Colonic mucosa (tissue), 4 donors: ENCODE measurements at regions of chr18 and their contacts with region 1.

Region 1: GRCh38 chr18:9334329-9334972 is at the start of gene TWSG1:
- DNase-seq: peak; percentile 94
- H3K4me3 ChIP-seq: peak within 1 kb of the TSS; percentile 82
- H3K27ac ChIP-seq: peak within 1 kb of the TSS; percentile 80
- H3K4me1 ChIP-seq: peaks cover 3% of the 10 kb centered on the region
- H3K27me3 ChIP-seq: no peaks in the 10 kb centered on the region
- CTCF ChIP-seq: peak; percentile 11
- total RNA-seq, gene TWSG1: 14.1 to 25.1 TPM

Region 2: DNA sequence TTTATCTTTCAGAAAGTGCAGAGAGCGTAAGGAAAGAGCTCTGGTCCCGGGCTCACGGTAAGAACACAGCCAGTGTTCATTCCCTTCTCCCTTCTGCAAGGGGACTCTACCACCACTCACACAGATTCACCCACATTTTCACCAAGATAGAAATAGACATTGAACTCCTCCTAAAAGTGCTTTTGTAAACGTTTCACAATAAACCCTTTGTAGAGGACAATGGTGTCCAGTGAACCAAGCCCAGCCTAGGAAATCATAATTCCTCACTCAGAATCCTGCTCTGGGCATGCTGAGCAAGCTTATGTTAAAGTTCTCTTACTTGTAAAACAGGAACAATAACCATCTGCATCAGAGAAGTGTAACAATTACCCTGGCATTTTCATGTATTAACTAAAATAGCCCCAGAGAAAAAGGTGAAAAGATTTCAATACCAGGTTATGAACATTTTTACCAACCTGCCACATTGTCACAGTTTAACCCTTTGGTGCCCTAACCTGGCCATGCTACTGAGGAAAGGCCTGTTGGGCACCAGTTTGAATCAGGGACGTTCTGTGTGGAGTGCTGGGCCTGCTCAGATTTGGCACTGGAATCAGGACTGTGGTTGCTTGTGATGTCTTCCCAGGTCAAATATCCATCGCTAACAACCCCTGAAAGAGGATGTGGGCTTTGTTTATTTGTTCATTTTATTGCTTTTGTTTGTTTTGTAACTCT is 254.5 kb before region 1 on chr18:
- intact Hi-C with region 1: loop called (anchors 10 kb)
- DNase-seq: no peak
- H3K4me3 ChIP-seq: no peak overlapping the region
- H3K27ac ChIP-seq: no peak overlapping the region
- H3K4me1 ChIP-seq: no peaks in the 10 kb centered on the region
- H3K27me3 ChIP-seq: no peaks in the 10 kb centered on the region
- CTCF ChIP-seq: no peak